Activated CD8-positive, alpha-beta memory T cell treated with anti-CD3 and anti-CD28 coated beads, Interleukin-2, amount 10 ng/mL, durations not matched to agents 7 days and 5 days (primary cell): ENCODE measurements at regions of chr3 and their contacts with region 1.

Region 1: GRCh38 chr3:58630076-58630709 is 36.4 kb downstream of the FAM3D start:
- DNase-seq: peak; percentile 71
- ATAC-seq: peak; percentile 45
- H3K4me3 Mint-ChIP-seq: no peak overlapping the region
- H3K27ac Mint-ChIP-seq: no peak overlapping the region
- H3K4me1 Mint-ChIP-seq: peaks cover 4% of the 10 kb centered on the region
- H3K27me3 Mint-ChIP-seq: peaks cover 3% of the 10 kb centered on the region

Region 2: GRCh38 chr3:58640700-58641372 is 10.6 kb after region 1 on chr3:
- CTCF ChIA-PET with region 1: interaction called, 10 read pairs
- DNase-seq: peak; percentile 70
- ATAC-seq: peak; percentile 90
- H3K4me3 Mint-ChIP-seq: no peak overlapping the region
- H3K27ac Mint-ChIP-seq: no peak overlapping the region
- H3K4me1 Mint-ChIP-seq: no peaks in the 10 kb centered on the region
- H3K27me3 Mint-ChIP-seq: no peaks in the 10 kb centered on the region

Region 3: DNA sequence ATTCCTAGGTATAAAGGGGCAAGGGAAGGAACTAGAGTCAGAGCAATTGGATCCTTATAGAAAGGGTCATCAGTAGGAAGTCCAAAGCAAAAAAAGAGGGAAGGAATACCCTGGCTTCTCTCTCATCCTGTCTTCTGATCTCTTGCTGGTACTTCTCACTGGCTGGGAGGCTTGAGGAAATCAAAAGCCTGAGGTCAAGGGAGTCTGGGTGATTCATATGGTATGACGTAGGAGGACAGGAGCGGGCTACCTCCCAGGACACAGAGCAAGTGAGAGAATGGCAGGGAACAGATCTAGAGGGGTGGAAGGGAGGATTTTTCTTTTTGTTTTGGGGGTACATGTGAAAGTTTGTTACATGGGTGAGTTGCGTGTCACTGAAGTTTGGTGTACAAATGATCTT is 343.6 kb after region 1 on chr3:
- CTCF ChIA-PET with region 1: no interaction called
- DNase-seq: no peak
- ATAC-seq: no peak
- H3K4me3 Mint-ChIP-seq: no peak overlapping the region
- H3K27ac Mint-ChIP-seq: no peak overlapping the region
- H3K4me1 Mint-ChIP-seq: no peaks in the 10 kb centered on the region
- H3K27me3 Mint-ChIP-seq: no peaks in the 10 kb centered on the region